Dendritic cell treated with granulocyte-macrophage colony-stimulating factor and Interleukin-4, amounts not matched to agents 40 ng/mL and 50 ng/mL, for 4 days (primary cell): ENCODE measurements at regions of chr20 and their contacts with region 1.

Region 1: GRCh38 chr20:23637282-23638221 is at the start of gene CST3:
- H3K4me3 Mint-ChIP-seq: peak within 1 kb of the TSS; percentile 89
- H3K27ac Mint-ChIP-seq: peak within 1 kb of the TSS; percentile 94
- H3K4me1 Mint-ChIP-seq: peaks cover 86% of the 10 kb centered on the region
- H3K27me3 Mint-ChIP-seq: no peaks in the 10 kb centered on the region

Region 2: GRCh38 chr20:23361598-23362384 is 275.8 kb before region 1 on chr20 and contains the start of gene GZF1:
- intact Hi-C with region 1: loop called (anchors 5 kb)
- H3K4me3 Mint-ChIP-seq: peak within 1 kb of the TSS; percentile 96
- H3K27ac Mint-ChIP-seq: peak within 1 kb of the TSS; percentile 98
- H3K4me1 Mint-ChIP-seq: peaks cover 49% of the 10 kb centered on the region
- H3K27me3 Mint-ChIP-seq: no peaks in the 10 kb centered on the region

Region 3: DNA sequence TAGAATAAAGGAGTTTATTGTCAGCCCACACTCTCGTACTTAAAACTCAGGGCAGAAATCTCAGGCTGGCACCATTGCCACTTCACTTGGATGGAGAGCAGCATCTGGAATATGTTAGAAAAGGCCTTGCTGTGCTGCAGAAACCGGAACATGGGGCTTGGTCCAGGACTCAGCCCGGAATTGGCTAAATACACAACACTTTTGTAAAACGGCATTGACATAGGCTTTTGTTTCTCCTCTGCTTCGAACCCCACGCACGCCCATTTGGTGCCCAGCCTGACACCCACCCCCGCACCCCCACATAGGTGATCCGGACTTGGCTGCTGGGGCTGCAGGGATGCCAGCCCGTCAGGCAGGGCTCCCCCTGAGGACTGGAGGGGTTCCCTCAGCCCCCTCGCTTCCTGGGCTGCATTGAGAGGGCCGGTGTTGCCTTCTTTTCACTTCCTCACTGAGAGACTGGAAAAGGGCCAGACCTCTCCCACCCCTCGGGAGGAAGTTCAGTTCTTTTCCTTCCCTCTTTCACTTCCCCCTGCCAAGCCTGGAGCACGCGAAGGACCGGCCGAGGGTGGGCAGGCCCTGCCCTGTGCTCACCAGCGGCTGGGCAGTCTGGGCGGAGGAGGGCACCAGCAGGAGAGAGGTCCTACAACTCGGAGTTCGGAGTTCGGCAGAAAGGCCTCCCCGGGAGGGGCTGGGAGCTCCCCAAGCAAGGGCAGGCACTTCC is 18.1 kb after region 1 on chr20:
- intact Hi-C with region 1: loop called (anchors 1 kb)
- H3K4me3 Mint-ChIP-seq: peak overlapping the region; percentile 73
- H3K27ac Mint-ChIP-seq: peak overlapping the region; percentile 92
- H3K4me1 Mint-ChIP-seq: peaks cover 78% of the 10 kb centered on the region
- H3K27me3 Mint-ChIP-seq: no peaks in the 10 kb centered on the region

Region 4: GRCh38 chr20:23668477-23668951 is 31.0 kb after region 1 on chr20:
- intact Hi-C with region 1: loop called (anchors 5 kb)
- H3K4me3 Mint-ChIP-seq: no peak overlapping the region
- H3K27ac Mint-ChIP-seq: no peak overlapping the region
- H3K4me1 Mint-ChIP-seq: no peaks in the 10 kb centered on the region
- H3K27me3 Mint-ChIP-seq: no peaks in the 10 kb centered on the region

Region 5: DNA sequence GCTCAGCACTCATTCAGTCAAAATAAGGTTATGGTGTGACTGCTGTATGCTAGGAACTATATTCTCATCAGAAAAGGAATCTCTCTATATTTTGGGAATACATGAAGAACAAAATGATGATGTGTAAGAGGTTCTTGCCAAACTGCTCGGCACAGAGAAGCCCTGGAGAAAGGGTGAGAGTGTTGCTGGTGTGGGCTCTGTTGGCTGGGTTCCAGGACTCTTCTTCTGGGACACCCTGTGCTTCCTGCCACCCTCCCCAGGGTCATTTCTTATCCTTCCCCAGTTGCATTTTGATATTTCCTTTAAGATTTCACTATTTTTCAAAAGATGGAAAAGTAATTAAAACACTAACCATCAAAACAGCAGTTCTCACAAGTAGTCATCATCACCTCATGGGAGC is 84.4 kb after region 1 on chr20:
- intact Hi-C with region 1: no loop called
- H3K4me3 Mint-ChIP-seq: no peak overlapping the region
- H3K27ac Mint-ChIP-seq: no peak overlapping the region
- H3K4me1 Mint-ChIP-seq: no peaks in the 10 kb centered on the region
- H3K27me3 Mint-ChIP-seq: peaks cover 8% of the 10 kb centered on the region

Region 6: DNA sequence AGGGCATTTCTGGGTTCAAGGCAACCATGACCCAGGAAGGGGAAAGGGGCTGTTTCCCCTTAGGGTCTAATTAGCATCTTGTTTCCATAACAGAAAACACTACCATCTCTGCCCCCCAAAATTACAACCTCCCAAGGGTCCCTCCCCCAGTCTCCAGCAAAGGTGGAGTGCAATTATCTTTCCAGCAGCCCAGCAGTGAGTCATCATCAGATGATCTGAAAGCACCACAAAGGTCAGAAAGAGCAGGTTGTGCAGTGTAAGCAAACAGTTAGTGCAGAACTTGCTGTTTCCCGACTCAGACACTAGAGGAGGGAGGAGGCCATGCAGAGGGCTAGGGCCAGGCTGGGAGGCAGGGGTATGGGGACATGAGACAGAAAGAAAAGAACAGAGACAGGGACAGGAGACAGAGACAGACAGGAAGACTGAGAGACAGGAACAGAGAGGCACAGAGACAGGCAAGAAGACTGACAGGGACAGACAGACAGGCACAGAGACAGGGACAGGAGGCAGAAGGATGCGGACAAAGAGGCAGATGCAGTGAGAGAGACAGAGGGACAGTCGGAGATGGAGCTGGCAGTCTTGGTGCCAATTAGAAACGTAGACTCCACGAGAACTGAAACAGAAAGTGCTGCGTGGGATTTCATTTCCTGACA is 1672.8 kb after region 1 on chr20:
- intact Hi-C with region 1: loop called (anchors 10 kb)
- H3K4me3 Mint-ChIP-seq: peak overlapping the region; percentile 77
- H3K27ac Mint-ChIP-seq: peak overlapping the region; percentile 96
- H3K4me1 Mint-ChIP-seq: peaks cover 69% of the 10 kb centered on the region
- H3K27me3 Mint-ChIP-seq: no peaks in the 10 kb centered on the region

Region 7: GRCh38 chr20:25623736-25624499 is 1986.4 kb after region 1 on chr20 and contains the start of gene NANP:
- intact Hi-C with region 1: loop called (anchors 10 kb)
- H3K4me3 Mint-ChIP-seq: peak within 1 kb of the TSS; percentile 83
- H3K27ac Mint-ChIP-seq: peak within 1 kb of the TSS; percentile 92
- H3K4me1 Mint-ChIP-seq: peaks cover 39% of the 10 kb centered on the region
- H3K27me3 Mint-ChIP-seq: no peaks in the 10 kb centered on the region